Aorta (tissue), 5 donors: ENCODE measurements at regions of chr1 and their contacts with region 1.

Region 1: DNA sequence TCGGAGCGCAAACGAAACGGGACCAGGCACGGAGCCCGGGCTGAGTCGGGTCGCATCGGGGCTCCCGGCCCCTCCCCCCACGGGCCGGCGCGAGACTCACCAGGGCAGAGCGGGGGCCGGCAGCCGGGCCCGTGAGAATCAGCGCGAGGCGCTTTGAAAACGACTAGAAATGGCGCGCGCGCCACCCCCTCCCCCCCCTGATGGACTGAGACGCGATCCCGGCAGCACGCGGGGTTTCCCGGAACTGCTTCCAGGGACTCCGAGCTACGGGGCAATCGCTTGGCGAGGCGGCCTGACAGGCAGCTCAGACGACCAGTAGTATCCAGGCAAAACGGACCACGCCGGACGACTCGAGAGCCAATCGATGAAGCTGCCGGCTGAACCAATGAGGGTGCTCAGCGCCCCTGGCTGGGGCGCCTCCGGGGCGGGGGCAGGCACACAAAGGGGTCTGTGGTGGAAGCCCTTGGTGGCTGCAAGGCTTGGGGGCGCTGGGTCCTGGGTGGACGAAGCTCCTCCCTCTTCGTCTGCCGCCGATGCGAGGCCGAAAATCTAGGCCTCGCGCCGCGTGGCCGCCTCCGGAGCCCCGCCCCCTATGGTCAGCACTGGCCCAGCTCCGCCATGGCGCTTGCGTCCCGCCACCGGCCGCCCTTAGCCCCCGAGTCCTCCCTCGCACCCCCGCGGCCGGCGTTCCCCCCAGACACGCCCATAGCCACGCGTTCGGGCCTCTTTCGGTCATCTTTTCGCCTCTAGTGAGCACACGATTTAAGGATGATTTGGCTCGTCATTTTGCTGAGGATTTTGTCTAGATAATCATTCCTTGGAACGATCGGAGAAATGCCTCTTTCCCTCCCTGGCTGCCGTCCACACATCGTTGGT is at the start of gene HNRNPR:
- DNase-seq: peak; percentile 100
- ATAC-seq: peak; percentile 99
- H3K4me3 ChIP-seq: peak within 1 kb of the TSS; percentile 88 to 99
- H3K27ac ChIP-seq: peak within 1 kb of the TSS; percentile 69 to 97
- H3K4me1 ChIP-seq: peaks cover 0 to 4% of the 10 kb centered on the region in 2 donors
- H3K27me3 ChIP-seq: no peaks in the 10 kb centered on the region
- total RNA-seq, gene HNRNPR: 113 to 120 TPM

Region 2: GRCh38 chr1:22611530-22611947 is 732.8 kb before region 1 on chr1:
- intact Hi-C with region 1: no loop called
- DNase-seq: no peak
- ATAC-seq: no peak
- H3K4me3 ChIP-seq: no peak overlapping the region
- H3K27ac ChIP-seq: no peak overlapping the region
- H3K4me1 ChIP-seq: no peaks in the 10 kb centered on the region
- H3K27me3 ChIP-seq: no peaks in the 10 kb centered on the region

Region 3: GRCh38 chr1:23108918-23109533 is 235.3 kb before region 1 on chr1:
- intact Hi-C with region 1: no loop called
- DNase-seq: no peak
- ATAC-seq: no peak
- H3K4me3 ChIP-seq: no peak overlapping the region
- H3K27ac ChIP-seq: no peak overlapping the region
- H3K4me1 ChIP-seq: peaks cover 0 to 5% of the 10 kb centered on the region in 2 donors
- H3K27me3 ChIP-seq: no peaks in the 10 kb centered on the region

Region 4: GRCh38 chr1:23367791-23368561 is 23.6 kb after region 1 on chr1:
- intact Hi-C with region 1: loop called in 1 of 2 experiments (anchors 1 kb)
- DNase-seq: peak; percentile 99
- ATAC-seq: peak; percentile 97
- H3K4me3 ChIP-seq: peak overlapping the region; percentile 60 to 75
- H3K27ac ChIP-seq: peak overlapping the region in 1 of 2 donors; percentile 93
- H3K4me1 ChIP-seq: peaks cover 0 to 4% of the 10 kb centered on the region in 2 donors
- H3K27me3 ChIP-seq: no peaks in the 10 kb centered on the region

Region 5: GRCh38 chr1:23384302-23385058 is 40.1 kb after region 1 on chr1:
- intact Hi-C with region 1: no loop called
- DNase-seq: no peak
- ATAC-seq: no peak
- H3K4me3 ChIP-seq: no peak overlapping the region
- H3K27ac ChIP-seq: no peak overlapping the region
- H3K4me1 ChIP-seq: no peaks in the 10 kb centered on the region
- H3K27me3 ChIP-seq: no peaks in the 10 kb centered on the region

Region 6: GRCh38 chr1:23403735-23404486 is 59.6 kb after region 1 on chr1:
- intact Hi-C with region 1: loop called (anchors 5 to 10 kb)
- DNase-seq: peak; percentile 92 to 96
- ATAC-seq: peak; percentile 89
- H3K4me3 ChIP-seq: no peak overlapping the region
- H3K27ac ChIP-seq: peak overlapping the region in 1 of 2 donors; percentile 14
- H3K4me1 ChIP-seq: no peaks in the 10 kb centered on the region
- H3K27me3 ChIP-seq: no peaks in the 10 kb centered on the region

Region 7: DNA sequence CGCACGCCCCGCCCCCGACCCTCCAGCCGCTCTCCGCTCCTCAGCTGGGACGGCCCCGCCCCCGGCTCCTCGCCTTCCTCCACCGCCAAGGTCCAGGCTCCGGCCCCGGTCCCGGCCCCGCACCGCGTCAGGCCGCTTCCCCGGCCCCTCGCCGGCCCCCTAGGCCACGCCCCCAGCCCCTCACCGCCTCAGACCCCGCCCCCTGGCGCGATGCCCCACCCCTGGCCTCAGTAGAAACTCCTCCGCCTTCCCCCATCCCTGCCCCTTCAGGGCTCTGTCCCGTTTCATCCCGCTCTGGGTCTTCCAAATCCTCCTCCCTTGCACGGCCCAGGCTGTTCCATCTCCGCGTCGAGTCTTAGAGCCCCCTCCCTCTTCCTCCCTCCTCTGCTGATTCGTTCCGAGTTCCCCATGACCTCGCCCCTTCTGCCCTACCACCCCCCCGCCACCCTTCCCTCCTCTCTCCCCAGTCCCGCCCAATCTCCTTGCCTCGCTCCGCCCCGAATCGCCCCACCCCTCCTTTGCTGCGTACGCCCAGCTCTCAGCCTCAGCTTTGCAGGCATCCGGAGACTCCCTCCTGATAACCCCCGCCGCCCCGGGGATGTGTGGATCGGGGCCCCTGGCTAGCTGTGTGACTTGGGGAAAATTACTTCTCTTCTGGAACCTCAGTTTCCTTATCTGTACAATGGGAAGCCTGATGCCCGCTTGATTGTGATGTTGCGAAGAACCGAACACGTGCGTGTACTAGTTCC is 140.1 kb after region 1 on chr1:
- intact Hi-C with region 1: loop called in 1 of 2 experiments (anchors 5 kb)
- DNase-seq: peak; percentile 96 to 99
- ATAC-seq: peak; percentile 96
- H3K4me3 ChIP-seq: peak overlapping the region; percentile 80 to 90
- H3K27ac ChIP-seq: peak overlapping the region; percentile 52 to 82
- H3K4me1 ChIP-seq: no peaks in the 10 kb centered on the region
- H3K27me3 ChIP-seq: no peaks in the 10 kb centered on the region

Region 8: GRCh38 chr1:23539698-23540266 is 195.4 kb after region 1 on chr1:
- intact Hi-C with region 1: loop called in 1 of 2 experiments (anchors 10 kb)
- DNase-seq: peak; percentile 90 to 94
- ATAC-seq: peak; percentile 93
- H3K4me3 ChIP-seq: no peak overlapping the region
- H3K27ac ChIP-seq: peak overlapping the region in 1 of 2 donors; percentile 17
- H3K4me1 ChIP-seq: no peaks in the 10 kb centered on the region
- H3K27me3 ChIP-seq: no peaks in the 10 kb centered on the region